ENCODE measurements at regions of chr21 and their contacts with region 1.

Region 1: GRCh38 chr21:20739421-20739820 is 258.8 kb upstream of the NCAM2 start:
- DNase-seq: no peak
- H3K4me3 ChIP-seq: no peak overlapping the region
- H3K27ac ChIP-seq: no peak overlapping the region
- H3K4me1 ChIP-seq: no peaks in the 10 kb centered on the region
- H3K27me3 ChIP-seq: no peaks in the 10 kb centered on the region

Region 2: DNA sequence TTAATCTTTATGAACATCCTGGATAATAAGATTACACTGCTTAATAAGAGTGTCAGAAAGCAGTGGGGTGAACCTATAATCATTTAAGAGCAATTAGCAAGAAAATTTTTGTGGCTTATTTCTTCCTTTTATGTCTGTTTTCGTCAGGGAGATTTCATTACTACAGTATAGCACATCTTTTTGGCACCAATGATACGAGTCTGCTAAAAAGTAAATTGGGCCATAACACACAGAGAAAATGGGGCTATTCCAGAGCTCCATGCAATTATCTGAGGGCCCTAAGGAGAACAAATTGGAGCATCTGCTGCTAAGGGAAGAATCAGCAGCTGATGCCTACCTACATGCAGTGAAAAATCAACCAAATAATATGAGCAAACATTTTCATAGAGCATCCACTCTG is 71.5 kb before region 1 on chr21:
- in situ Hi-C with region 1: loop called (anchors 10 kb)
- DNase-seq: no peak
- H3K4me3 ChIP-seq: no peak overlapping the region
- H3K27ac ChIP-seq: no peak overlapping the region
- H3K4me1 ChIP-seq: no peaks in the 10 kb centered on the region
- H3K27me3 ChIP-seq: no peaks in the 10 kb centered on the region